ENCODE measurements at regions of chrX and their contacts with region 1.

Region 1: DNA sequence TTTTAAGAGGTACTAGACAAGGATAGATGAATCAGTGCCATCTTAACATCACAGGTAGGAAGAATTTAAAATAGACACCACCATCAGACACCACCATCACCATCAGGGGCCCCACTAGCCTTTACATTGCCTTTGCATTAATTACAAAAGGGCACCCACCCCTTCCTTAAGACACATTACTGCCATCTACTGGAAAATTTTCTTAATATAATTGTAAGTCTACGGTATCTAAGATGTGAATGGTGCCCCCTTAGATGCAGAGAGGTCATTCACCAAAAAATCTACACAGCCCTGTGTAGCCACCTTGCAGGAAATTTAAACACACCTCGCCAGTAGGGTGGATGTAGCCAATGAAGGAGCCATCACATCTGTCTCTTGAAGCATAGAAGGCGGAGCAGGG is 184.1 kb downstream of the MID1IP1 start:
- DNase-seq: no peak
- ATAC-seq: no peak
- H3K4me3 ChIP-seq: no peak overlapping the region
- H3K27ac ChIP-seq: no peak overlapping the region
- H3K4me1 ChIP-seq: no peaks in the 10 kb centered on the region
- H3K27me3 ChIP-seq: no peaks in the 10 kb centered on the region
- CTCF ChIP-seq: peak in 8 of 12 donors; percentile 23 to 42 (median 28)
- POLR2A ChIP-seq: no peak

Region 2: GRCh38 chrX:38768079-38768478 is 217.3 kb before region 1 on chrX:
- intact Hi-C with region 1: loop called in 6 of 10 experiments (anchors 2 to 10 kb)
- DNase-seq: no peak
- ATAC-seq: no peak
- H3K4me3 ChIP-seq: no peak overlapping the region
- H3K27ac ChIP-seq: no peak overlapping the region
- H3K4me1 ChIP-seq: no peaks in the 10 kb centered on the region
- H3K27me3 ChIP-seq: peaks cover 0 to 10% (median 0%) of the 10 kb centered on the region in 9 donors
- CTCF ChIP-seq: peak in 11 of 12 donors; percentile 19 to 58 (median 34)
- POLR2A ChIP-seq: no peak

Region 3: DNA sequence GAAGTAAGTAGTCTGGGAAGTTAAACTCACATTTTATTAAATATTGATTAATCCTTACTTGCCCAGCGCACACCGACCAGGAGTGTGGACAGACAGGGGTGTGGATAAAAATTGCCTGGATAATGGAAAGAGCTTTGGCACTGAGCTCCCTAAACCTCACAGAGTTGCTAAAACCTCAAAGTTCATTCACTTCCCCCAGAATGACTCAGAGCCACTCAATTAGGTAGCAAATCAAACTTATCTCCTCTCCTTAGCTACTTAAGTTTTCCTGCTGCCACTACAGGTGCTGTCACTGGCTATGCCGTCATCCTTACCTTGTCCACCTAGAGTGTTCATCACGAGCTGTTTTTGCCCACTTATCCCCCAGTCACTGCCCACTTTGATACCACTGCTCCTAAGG is 211.1 kb before region 1 on chrX:
- intact Hi-C with region 1: loop called in 6 of 10 experiments (anchors 2 to 10 kb)
- DNase-seq: no peak
- ATAC-seq: no peak
- H3K4me3 ChIP-seq: no peak overlapping the region
- H3K27ac ChIP-seq: no peak overlapping the region
- H3K4me1 ChIP-seq: no peaks in the 10 kb centered on the region
- H3K27me3 ChIP-seq: peaks cover 0 to 10% (median 0%) of the 10 kb centered on the region in 9 donors
- CTCF ChIP-seq: no peak
- POLR2A ChIP-seq: no peak

Region 4: DNA sequence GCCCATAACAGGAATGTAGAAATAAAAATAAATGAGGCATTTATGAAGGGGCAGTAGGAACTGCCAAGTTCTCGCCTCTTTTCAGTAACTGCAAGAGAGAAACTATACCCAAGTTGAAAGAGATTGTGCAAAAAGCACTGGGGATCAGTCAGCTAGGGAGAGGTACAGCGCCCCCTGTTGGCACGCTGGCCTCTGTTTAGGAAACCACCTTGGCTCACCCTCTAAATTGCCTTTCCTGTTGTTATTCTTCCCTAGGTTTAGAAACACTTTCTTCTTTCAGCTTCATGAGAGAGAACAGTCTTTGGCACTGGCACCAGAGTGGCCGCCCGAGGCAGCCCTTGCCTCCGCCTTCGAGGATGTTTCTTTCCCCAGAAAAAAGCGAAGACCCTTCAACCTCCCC is 164.4 kb after region 1 on chrX:
- intact Hi-C with region 1: loop called in 1 of 10 experiments (anchors 10 kb)
- DNase-seq: peak; percentile 47 to 83 (median 62)
- ATAC-seq: peak in 3 of 4 donors; percentile 63 to 69 (median 68)
- H3K4me3 ChIP-seq: no peak overlapping the region
- H3K27ac ChIP-seq: no peak overlapping the region
- H3K4me1 ChIP-seq: peaks cover 0 to 7% (median 0%) of the 10 kb centered on the region in 12 donors
- H3K27me3 ChIP-seq: peaks cover 0 to 25% (median 0%) of the 10 kb centered on the region in 9 donors
- CTCF ChIP-seq: peak; percentile 54 to 80 (median 62)
- POLR2A ChIP-seq: no peak

Measured in heart left ventricle (tissue), 16 donors.